ENCODE measurements at regions of chr16 and their contacts with region 1.

Region 1: DNA sequence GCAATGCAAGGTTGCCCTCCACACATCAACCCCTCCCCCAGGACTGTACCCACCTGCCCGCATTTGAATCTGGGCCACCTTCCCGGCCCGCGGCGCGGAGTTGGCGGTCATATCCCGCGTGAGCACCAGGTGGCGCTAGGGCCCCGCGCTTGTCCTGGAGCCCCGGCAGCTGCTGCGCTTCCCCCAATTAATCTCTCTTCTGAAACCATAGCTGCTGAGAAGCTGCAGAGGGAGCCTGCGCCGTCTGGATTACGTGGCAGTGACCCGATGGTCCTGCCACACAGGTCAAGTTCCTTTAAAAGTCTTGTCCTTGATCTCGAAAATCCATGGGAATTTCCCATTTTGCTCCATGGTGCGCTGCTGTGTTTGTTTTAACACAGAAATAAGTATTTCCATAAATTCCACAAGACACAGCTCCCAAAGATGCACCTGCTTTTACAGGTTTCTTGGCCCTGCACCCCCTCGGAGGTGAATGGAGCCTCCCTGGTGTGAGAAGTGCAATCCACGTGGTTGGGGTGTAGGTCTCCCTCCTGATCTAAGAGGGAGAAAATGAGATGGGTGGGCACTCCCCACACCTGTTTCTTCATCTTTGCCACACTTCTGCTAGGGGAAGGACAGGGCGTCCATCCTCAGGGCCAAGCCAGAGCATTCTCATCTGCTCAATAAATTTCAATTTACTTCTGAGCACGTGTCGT is 22.1 kb downstream of the COX4I1 start:
- DNase-seq: peak; percentile 71 to 93 (median 84)
- ATAC-seq: peak; percentile 86 to 97 (median 96)
- H3K4me3 ChIP-seq: no peak overlapping the region
- H3K27ac ChIP-seq: no peak overlapping the region
- H3K4me1 ChIP-seq: no peaks in the 10 kb centered on the region
- H3K27me3 ChIP-seq: peaks cover 0 to 4% (median 0%) of the 10 kb centered on the region in 4 donors
- CTCF ChIP-seq: peak; percentile 94 to 96 (median 94)

Region 2: GRCh38 chr16:85986931-85987749 is 165.6 kb after region 1 on chr16:
- intact Hi-C with region 1: loop called (anchors 2 to 10 kb)
- DNase-seq: peak in 2 of 6 donors; percentile 15 to 70
- ATAC-seq: peak in 2 of 4 donors; percentile 37 to 53
- H3K4me3 ChIP-seq: no peak overlapping the region
- H3K27ac ChIP-seq: no peak overlapping the region
- H3K4me1 ChIP-seq: no peaks in the 10 kb centered on the region
- H3K27me3 ChIP-seq: peaks cover 0 to 3% (median 0%) of the 10 kb centered on the region in 4 donors
- CTCF ChIP-seq: peak in 2 of 4 donors; percentile 34 to 42

Region 3: DNA sequence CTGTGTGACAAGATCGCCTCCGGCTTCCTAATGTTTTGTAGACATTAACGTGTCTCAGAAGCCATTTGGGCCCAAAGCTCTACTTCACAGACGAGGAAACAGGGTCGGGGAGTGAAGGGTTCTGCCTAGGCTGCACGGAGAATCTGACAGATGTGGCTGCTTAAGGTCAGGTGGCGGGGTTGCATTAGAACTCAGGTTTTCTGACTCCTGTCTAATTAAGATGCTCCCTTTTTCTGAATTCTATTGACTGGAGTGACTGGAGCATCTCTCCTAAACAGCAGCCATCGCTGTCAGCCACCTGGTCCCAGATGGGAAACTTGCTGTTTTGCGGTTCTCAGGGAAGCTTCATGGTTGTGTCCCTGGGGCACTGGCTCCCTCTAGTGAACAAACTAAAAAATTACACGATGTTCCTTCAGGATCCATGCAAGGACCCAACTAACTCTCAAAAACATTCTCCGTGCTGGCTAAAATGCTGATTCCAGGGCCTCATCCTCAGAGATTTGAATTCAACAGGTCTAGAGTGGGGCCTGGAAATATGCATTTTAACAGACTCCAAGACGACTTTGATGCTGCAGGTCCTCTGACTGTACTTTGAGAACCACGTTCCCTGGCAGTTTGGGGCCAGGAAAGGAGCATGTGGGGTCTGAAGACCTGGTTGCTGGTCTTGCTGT is 194.7 kb after region 1 on chr16:
- intact Hi-C with region 1: loop called in 2 of 3 experiments (anchors 5 kb)
- DNase-seq: peak in 3 of 6 donors; percentile 12 to 55 (median 29)
- ATAC-seq: peak; percentile 77 to 92 (median 82)
- H3K4me3 ChIP-seq: no peak overlapping the region
- H3K27ac ChIP-seq: no peak overlapping the region
- H3K4me1 ChIP-seq: no peaks in the 10 kb centered on the region
- H3K27me3 ChIP-seq: no peaks in the 10 kb centered on the region
- CTCF ChIP-seq: peak; percentile 59 to 72 (median 64)